A549 (cell line): ENCODE measurements at regions of chr10 and their contacts with region 1.

Region 1: GRCh38 chr10:80444646-80445319 is 9.3 kb upstream of the TSPAN14 start:
- DNase-seq: peak; percentile 83 to 89
- ATAC-seq: peak; percentile 88 to 92
- H3K4me3 ChIP-seq: no peak overlapping the region
- H3K27ac ChIP-seq: peak overlapping the region; percentile 64 to 80
- H3K4me1 ChIP-seq: peaks cover 26% of the 10 kb centered on the region
- CTCF ChIP-seq: peak; percentile 98
- EP300 ChIP-seq: no peak
- POLR2A ChIP-seq: no peak
- RAD21 ChIP-seq: peak; percentile 99

Region 2: DNA sequence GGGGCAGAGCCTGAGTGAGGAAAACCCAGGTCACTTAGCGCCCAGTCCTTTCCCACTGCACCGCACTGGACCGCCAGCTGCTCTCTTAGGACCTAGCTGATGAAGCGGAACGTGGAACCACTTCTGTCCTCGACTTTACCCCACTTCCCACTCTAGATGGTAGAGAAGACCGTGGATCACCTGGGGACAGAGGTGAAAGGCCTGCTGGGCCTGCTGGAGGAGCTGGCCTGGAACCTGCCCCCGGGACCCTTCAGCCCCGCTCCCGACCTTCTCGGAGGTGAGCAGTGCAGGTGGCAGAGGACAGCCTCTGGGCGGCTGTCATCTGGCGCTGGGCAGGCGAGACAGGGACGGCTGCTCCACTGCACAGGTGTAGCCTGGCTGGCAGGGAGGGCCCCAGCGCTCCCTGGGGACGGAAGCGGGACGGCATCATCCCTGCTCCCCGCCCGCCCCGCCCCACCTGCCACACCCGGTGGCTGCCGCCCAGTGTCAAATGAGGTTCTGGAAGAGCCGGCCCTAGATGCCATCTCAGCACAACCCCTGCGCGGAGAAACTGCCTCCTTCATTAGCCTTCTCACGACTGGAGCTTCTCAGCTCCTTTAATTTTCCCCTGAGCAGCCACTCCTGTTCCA is 300.6 kb before region 1 on chr10:
- CTCF ChIA-PET with region 1: no interaction called
- POLR2A ChIA-PET with region 1: no interaction called
- DNase-seq: peak in 1 of 2 experiments; percentile 37
- ATAC-seq: peak; percentile 70 to 78
- H3K4me3 ChIP-seq: peak overlapping the region; percentile 33
- H3K27ac ChIP-seq: peak overlapping the region in 1 of 2 experiments; percentile 67; a peak in 4 of 6 replicates
- H3K4me1 ChIP-seq: peaks cover 3% of the 10 kb centered on the region; the same call in 1 of the 3 replicates
- CTCF ChIP-seq: no peak
- EP300 ChIP-seq: no peak
- POLR2A ChIP-seq: no peak
- RAD21 ChIP-seq: peak in 1 of 2 experiments; percentile 33; a peak in 2 of 5 replicates

Region 3: GRCh38 chr10:80333983-80334382 is 110.8 kb before region 1 on chr10:
- CTCF ChIA-PET with region 1: no interaction called
- POLR2A ChIA-PET with region 1: no interaction called
- DNase-seq: no peak
- ATAC-seq: peak in 1 of 2 experiments; percentile 30; a peak in 1 of 6 replicates
- H3K4me3 ChIP-seq: no peak overlapping the region
- H3K27ac ChIP-seq: no peak overlapping the region
- H3K4me1 ChIP-seq: no peaks in the 10 kb centered on the region
- CTCF ChIP-seq: no peak
- EP300 ChIP-seq: no peak
- POLR2A ChIP-seq: no peak
- RAD21 ChIP-seq: no peak

Region 4: GRCh38 chr10:80408242-80409101 is 36.3 kb before region 1 on chr10 and contains the start of gene PRXL2A:
- CTCF ChIA-PET with region 1: interaction called, 30 read pairs
- POLR2A ChIA-PET with region 1: interaction called, 5 read pairs
- DNase-seq: peak; percentile 78 to 92
- ATAC-seq: peak; percentile 95 to 97
- H3K4me3 ChIP-seq: peak within 1 kb of the TSS; percentile 73
- H3K27ac ChIP-seq: peak within 1 kb of the TSS; percentile 83 to 90
- H3K4me1 ChIP-seq: peaks cover 27% of the 10 kb centered on the region; the same call in 2 of the 3 replicates
- CTCF ChIP-seq: no peak
- EP300 ChIP-seq: no peak
- POLR2A ChIP-seq: peak; percentile 71
- RAD21 ChIP-seq: no peak
- polyA plus RNA-seq, gene PRXL2A: 47.6 and 59.3 TPM in 2 replicates

Region 5: DNA sequence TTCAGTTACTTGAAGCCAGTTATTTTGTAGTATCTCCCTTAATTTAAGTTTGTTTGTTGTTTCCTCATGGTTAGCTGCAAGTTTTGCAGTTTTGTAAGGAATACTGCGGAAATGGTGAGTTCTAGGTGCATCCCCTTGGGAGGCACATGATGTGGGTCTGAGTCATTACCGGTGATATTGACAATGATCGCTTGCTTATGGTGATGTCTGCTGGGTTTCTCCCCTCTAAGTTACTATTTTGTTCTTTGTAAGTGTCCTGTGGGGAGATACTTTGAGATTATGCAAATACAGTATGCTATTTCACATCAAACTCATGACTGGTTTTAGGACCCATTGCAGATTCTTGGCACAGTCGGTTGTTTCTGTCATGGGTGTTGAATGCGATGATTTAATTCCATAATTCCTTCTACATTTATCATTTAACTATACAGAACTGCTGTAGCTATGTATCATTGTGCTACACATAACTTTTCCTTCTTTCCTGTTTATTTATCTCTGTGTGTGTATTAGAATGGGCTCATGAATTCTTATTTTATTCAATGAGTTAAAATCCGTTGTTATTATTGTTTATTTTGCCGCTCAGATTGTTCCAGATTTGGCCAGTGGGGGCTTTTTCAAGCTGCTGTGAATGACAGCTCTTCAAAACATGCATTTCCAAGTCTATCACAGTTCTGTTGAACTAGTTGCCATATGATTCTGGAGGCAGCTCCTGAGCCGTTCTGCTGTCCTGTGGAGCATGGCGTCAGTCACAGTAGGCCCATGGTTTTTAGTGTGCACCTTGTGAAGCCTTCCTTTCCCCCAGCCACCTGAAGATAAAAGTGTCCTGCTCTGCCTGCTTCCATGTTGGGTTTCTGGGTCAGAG is 27.7 kb after region 1 on chr10:
- CTCF ChIA-PET with region 1: interaction called, 26 read pairs
- POLR2A ChIA-PET with region 1: interaction called, 5 read pairs
- DNase-seq: peak in 1 of 2 experiments; percentile 52
- ATAC-seq: peak; percentile 67 to 83
- H3K4me3 ChIP-seq: 0 out of 3 replicates have a peak overlapping the region, but pooled peaks have one; percentile 0
- H3K27ac ChIP-seq: peak overlapping the region; percentile 68 to 86
- H3K4me1 ChIP-seq: peaks cover 93% of the 10 kb centered on the region
- CTCF ChIP-seq: no peak
- EP300 ChIP-seq: peak; percentile 20 to 24; a peak in 1 of 5 replicates
- POLR2A ChIP-seq: no peak
- RAD21 ChIP-seq: no peak

Region 6: GRCh38 chr10:80498833-80499741 is 54.3 kb after region 1 on chr10:
- CTCF ChIA-PET with region 1: interaction called, 928 read pairs
- POLR2A ChIA-PET with region 1: no interaction called
- DNase-seq: peak; percentile 91 to 94
- ATAC-seq: peak; percentile 90 to 93
- H3K4me3 ChIP-seq: no peak overlapping the region
- H3K27ac ChIP-seq: peak overlapping the region; percentile 100
- H3K4me1 ChIP-seq: peaks cover 99% of the 10 kb centered on the region
- CTCF ChIP-seq: no peak
- EP300 ChIP-seq: peak; percentile 40 to 69; a peak in 3 of 5 replicates
- POLR2A ChIP-seq: no peak
- RAD21 ChIP-seq: peak; percentile 22 to 47; a peak in 4 of 5 replicates

Region 7: DNA sequence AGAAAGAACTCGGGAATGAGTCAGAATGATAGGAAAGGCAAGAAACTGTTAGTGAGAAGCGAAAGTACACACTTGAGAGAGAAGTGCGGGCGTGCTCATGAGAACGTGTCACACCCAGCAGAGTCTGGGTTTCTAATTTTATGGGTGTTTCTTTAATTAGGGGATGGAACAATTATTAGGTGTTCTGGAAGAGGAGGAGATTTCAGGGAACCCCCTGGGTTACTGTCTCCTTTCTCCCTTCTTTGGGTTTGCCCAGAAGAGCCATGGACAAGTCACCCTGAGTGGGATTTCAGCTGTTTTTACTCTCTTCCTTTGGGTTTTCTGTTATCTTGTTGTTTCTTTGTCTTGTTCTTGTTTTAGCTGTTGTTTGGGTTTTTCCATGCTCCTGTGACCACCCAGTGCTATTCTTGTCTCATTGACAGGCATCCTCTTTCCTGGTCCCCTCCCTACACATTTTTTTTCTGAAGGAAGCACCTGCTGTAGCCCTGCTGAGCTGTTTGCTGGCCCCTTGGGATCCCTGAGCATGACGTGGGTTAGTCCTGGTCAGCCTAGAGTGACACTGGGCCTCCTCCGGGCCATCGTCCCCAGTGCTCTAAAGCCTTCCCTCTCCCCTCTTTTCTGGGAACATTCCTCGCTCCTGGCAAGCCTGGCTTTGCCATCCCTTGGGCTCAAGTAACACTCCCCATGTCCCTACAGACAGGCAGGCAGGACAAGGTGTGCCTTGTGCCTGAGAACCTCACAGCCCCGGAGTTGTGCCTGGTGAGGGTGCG is 96.4 kb after region 1 on chr10:
- CTCF ChIA-PET with region 1: interaction called, 33 read pairs
- POLR2A ChIA-PET with region 1: no interaction called
- DNase-seq: no peak
- ATAC-seq: no peak
- H3K4me3 ChIP-seq: no peak overlapping the region
- H3K27ac ChIP-seq: no peak overlapping the region
- H3K4me1 ChIP-seq: peaks cover 4% of the 10 kb centered on the region; the same call in 1 of the 3 replicates
- CTCF ChIP-seq: no peak
- EP300 ChIP-seq: no peak
- POLR2A ChIP-seq: no peak
- RAD21 ChIP-seq: no peak

Region 8: GRCh38 chr10:80924063-80924952 is 479.5 kb after region 1 on chr10:
- CTCF ChIA-PET with region 1: interaction called, 37 read pairs
- POLR2A ChIA-PET with region 1: no interaction called
- DNase-seq: peak; percentile 7 to 51
- ATAC-seq: peak; percentile 78 to 90; a peak in 4 of 6 replicates
- H3K4me3 ChIP-seq: no peak overlapping the region
- H3K27ac ChIP-seq: no peak overlapping the region
- H3K4me1 ChIP-seq: no peaks in the 10 kb centered on the region
- CTCF ChIP-seq: peak; percentile 76
- EP300 ChIP-seq: no peak
- POLR2A ChIP-seq: no peak
- RAD21 ChIP-seq: peak; percentile 51 to 58; a peak in 4 of 5 replicates